PC-9 (cell line): ENCODE measurements at regions of chr9 and their contacts with region 1.

Region 1: DNA sequence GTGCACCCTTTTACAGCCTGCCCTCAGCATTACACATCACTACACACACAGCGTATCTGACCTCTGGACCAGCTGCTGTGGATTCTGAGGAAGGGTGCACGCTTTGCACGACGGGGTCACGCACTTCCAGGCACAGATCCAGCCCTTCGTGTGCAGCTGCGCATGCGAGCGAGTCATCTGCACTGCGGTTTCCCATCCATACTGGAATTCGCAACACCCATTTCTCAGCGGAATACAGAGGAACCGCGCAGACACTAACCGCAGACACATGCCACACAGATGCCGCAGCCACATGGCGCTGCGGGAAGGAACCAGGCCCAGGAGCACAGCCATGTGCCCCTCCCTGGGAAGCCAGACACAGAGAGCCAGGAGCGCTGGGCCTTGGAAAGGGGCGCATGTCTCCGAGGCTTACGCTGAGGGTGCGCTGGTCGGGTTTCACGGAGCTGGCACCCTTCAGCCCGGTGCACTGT is 43.5 kb downstream of the PNPLA7 start:
- DNase-seq: no peak
- H3K4me3 ChIP-seq: no peak overlapping the region
- H3K27ac ChIP-seq: no peak overlapping the region
- H3K4me1 ChIP-seq: peaks cover 6% of the 10 kb centered on the region
- H3K27me3 ChIP-seq: peaks cover 9% of the 10 kb centered on the region
- CTCF ChIP-seq: no peak

Region 2: DNA sequence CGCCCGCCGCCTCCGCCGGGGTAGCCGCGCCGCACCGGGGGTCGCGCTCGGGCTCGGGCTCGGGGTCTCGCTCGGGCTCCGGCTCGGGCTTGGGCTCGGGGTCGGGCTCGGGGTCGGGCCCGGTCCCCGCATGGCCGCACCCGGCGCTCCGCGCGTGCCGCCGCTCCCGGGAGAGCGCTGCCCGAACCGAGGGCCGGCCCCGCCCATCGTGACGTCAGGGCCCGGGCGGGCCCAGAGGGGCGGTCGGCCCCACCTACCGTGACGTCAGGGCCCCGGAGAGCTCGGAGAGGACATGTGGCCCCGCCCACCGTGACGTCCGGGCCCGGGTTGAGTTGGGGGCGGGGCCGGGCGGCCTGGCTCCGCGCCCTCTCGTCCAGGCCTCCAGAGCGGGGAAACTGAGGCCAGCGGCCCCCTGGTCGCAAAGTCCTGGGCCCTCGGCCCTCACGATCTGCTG is 47.6 kb before region 1 on chr9 and contains the start of gene NSMF:
- CTCF ChIA-PET with region 1: no interaction called
- POLR2A ChIA-PET with region 1: interaction called, 3 read pairs
- intact Hi-C with region 1: loop called (anchors 1 kb)
- DNase-seq: peak; percentile 68 to 96
- H3K4me3 ChIP-seq: peak within 1 kb of the TSS; percentile 68
- H3K27ac ChIP-seq: no peak within 1 kb of the TSS
- H3K4me1 ChIP-seq: 0 out of 2 replicates have a peak, but pooled peaks cover 4% of the 10 kb centered on the region
- H3K27me3 ChIP-seq: no peaks in the 10 kb centered on the region
- CTCF ChIP-seq: no peak
- total RNA-seq, gene NSMF: 73.4 and 90.4 TPM in 2 replicates